Common myeloid progenitor, CD34-positive (primary cell): ENCODE measurements at regions of chr1 and their contacts with region 1.

Region 1: GRCh38 chr1:150979092-150980056 is 2.7 kb upstream of the ANXA9 start:
- DNase-seq: peak; percentile 89 to 94 (median 90)
- H3K4me3 ChIP-seq: peak overlapping the region in 6 of 7 experiments; percentile 23 to 75 (median 60)
- H3K27ac ChIP-seq: peak overlapping the region; percentile 33 to 62
- H3K4me1 ChIP-seq: peaks cover 18 to 67% (median 53%) of the 10 kb centered on the region in 4 experiments
- H3K27me3 ChIP-seq: no peaks in the 10 kb centered on the region

Region 2: GRCh38 chr1:150846473-150847146 is 132.8 kb before region 1 on chr1:
- CTCF ChIA-PET with region 1: no interaction called
- POLR2A ChIA-PET with region 1: no interaction called
- DNase-seq: no peak
- H3K4me3 ChIP-seq: no peak overlapping the region
- H3K27ac ChIP-seq: no peak overlapping the region
- H3K4me1 ChIP-seq: peaks cover 0 to 9% (median 3%) of the 10 kb centered on the region in 4 experiments
- H3K27me3 ChIP-seq: no peaks in the 10 kb centered on the region

Region 3: GRCh38 chr1:150995896-150996295 is 16.5 kb after region 1 on chr1:
- CTCF ChIA-PET with region 1: interaction called, 235 read pairs
- POLR2A ChIA-PET with region 1: interaction called, 3 read pairs
- DNase-seq: peak in 2 of 3 donors; percentile 17 to 33
- H3K4me3 ChIP-seq: no peak overlapping the region
- H3K27ac ChIP-seq: no peak overlapping the region
- H3K4me1 ChIP-seq: peaks cover 8 to 28% (median 24%) of the 10 kb centered on the region in 4 experiments
- H3K27me3 ChIP-seq: no peaks in the 10 kb centered on the region